ENCODE measurements at regions of chr5 and their contacts with region 1.

Region 1: GRCh38 chr5:55534436-55535198 is at the start of gene PLPP1:
- DNase-seq: peak; percentile 94 to 97 (median 96)
- ATAC-seq: peak; percentile 97 to 98
- H3K4me3 ChIP-seq: peak within 1 kb of the TSS; percentile 81
- H3K27ac ChIP-seq: peak within 1 kb of the TSS; percentile 97
- H3K4me1 ChIP-seq: peaks cover 3% of the 10 kb centered on the region
- H3K27me3 ChIP-seq: no peaks in the 10 kb centered on the region
- total RNA-seq, gene PLPP1: 79.8 to 110 (median 88.8) TPM

Region 2: DNA sequence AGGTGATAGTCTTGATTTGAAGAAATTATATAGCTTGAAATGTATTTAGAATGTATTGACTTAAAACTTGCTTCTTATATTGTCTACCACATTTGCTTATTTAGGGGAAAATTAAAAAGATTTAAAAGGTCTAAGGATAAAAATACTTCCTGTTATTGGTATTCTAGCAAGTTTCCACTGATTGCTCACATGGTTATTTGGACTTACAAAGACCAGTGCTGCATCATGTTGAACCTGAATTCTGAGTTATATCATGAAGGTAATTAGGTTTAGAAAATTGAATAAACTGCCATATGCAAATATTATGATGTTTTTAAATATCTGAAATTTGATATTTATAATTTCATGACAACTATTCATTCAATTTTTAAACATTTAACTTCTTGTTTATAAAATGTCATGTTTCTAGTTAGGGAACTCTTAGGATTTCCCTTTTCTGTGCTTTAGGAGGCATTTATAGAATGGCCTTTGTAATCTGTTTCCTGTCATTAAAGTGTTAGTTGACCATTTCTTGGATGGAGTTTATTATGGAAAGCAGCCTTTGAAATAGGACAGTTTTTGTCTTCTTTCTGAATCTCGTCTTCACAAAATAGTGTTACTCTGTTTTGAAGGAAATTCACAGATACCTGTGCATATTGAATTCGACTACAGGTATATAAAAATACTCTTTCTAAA is 141.0 kb before region 1 on chr5:
- intact Hi-C with region 1: no loop called
- DNase-seq: no peak
- ATAC-seq: no peak
- H3K4me3 ChIP-seq: no peak overlapping the region
- H3K27ac ChIP-seq: no peak overlapping the region
- H3K4me1 ChIP-seq: peaks cover 6% of the 10 kb centered on the region
- H3K27me3 ChIP-seq: no peaks in the 10 kb centered on the region

Region 3: DNA sequence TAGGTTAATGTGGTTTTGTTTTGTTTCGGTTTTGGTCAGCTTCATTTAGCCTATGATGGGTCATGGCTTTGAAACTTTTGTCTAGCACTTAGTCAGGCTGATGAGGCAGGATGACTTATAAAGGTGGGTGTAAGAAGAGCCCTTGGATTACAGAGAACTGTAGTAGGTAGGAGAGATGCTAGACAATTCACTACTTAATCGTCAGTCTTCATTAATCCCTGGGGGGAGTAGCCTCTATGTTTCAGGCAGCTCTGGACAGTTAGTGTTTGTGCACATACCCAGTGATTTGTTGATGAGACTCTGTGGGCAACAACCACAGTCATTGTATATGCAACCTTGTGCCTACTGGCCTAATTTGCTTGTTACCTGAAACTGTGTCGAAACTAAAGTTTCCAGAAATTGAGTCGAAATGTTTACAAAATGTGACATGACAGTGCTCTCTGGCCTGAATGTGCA is 113.5 kb before region 1 on chr5:
- intact Hi-C with region 1: loop called in 1 of 4 experiments (anchors 10 kb)
- DNase-seq: no peak
- ATAC-seq: peak in 1 of 2 donors; percentile 13
- H3K4me3 ChIP-seq: no peak overlapping the region
- H3K27ac ChIP-seq: peak overlapping the region; percentile 21
- H3K4me1 ChIP-seq: peaks cover 3% of the 10 kb centered on the region
- H3K27me3 ChIP-seq: no peaks in the 10 kb centered on the region

Region 4: GRCh38 chr5:55601204-55601618 is 66.6 kb after region 1 on chr5:
- intact Hi-C with region 1: loop called in 3 of 4 experiments (anchors 5 to 10 kb)
- DNase-seq: peak; percentile 89 to 94 (median 90)
- ATAC-seq: peak; percentile 87 to 88
- H3K4me3 ChIP-seq: peak overlapping the region; percentile 45
- H3K27ac ChIP-seq: peak overlapping the region; percentile 100
- H3K4me1 ChIP-seq: peaks cover 25% of the 10 kb centered on the region
- H3K27me3 ChIP-seq: no peaks in the 10 kb centered on the region

Measured in right cardiac atrium (tissue), 5 donors.